Spleen (tissue), 13 donors: ENCODE measurements at regions of chr19 and their contacts with region 1.

Region 1: GRCh38 chr19:39532233-39533002 is at the start of gene EID2B:
- DNase-seq: peak; percentile 99
- H3K4me3 ChIP-seq: peak within 1 kb of the TSS; percentile 56 to 92 (median 80)
- H3K27ac ChIP-seq: peak within 1 kb of the TSS; percentile 65 to 90 (median 82)
- H3K4me1 ChIP-seq: peaks cover 5 to 43% (median 25%) of the 10 kb centered on the region in 6 donors
- H3K27me3 ChIP-seq: no peaks in the 10 kb centered on the region
- CTCF ChIP-seq: peak; percentile 94 to 100 (median 98)
- POLR2A ChIP-seq: peak in 1 of 3 donors; percentile 34
- total RNA-seq, gene EID2B: 2.0 to 5.3 (median 4.5) TPM

Region 2: GRCh38 chr19:39125554-39126311 is 406.7 kb before region 1 on chr19 and contains the start of gene PAK4:
- intact Hi-C with region 1: loop called (anchors 10 kb)
- DNase-seq: peak; percentile 99
- H3K4me3 ChIP-seq: peak within 1 kb of the TSS; percentile 79 to 99 (median 95)
- H3K27ac ChIP-seq: peak within 1 kb of the TSS; percentile 49 to 93 (median 84)
- H3K4me1 ChIP-seq: peaks cover 0 to 74% (median 52%) of the 10 kb centered on the region in 6 donors
- H3K27me3 ChIP-seq: peaks cover 0 to 6% (median 0%) of the 10 kb centered on the region in 7 donors
- CTCF ChIP-seq: peak in 2 of 11 experiments; percentile 24 to 43
- POLR2A ChIP-seq: peak in 2 of 3 donors; percentile 5 to 32
- total RNA-seq, gene PAK4: 9.5 to 27.8 (median 19.8) TPM

Region 3: GRCh38 chr19:39445265-39446111 is 86.9 kb before region 1 on chr19 and contains the start of gene SUPT5H:
- intact Hi-C with region 1: loop called (anchors 10 kb)
- DNase-seq: peak; percentile 99
- H3K4me3 ChIP-seq: peak within 1 kb of the TSS; percentile 60 to 97 (median 82)
- H3K27ac ChIP-seq: peak within 1 kb of the TSS; percentile 89 to 97 (median 96)
- H3K4me1 ChIP-seq: peaks cover 42 to 66% (median 55%) of the 10 kb centered on the region in 6 donors
- H3K27me3 ChIP-seq: no peaks in the 10 kb centered on the region
- CTCF ChIP-seq: peak in 4 of 11 experiments; percentile 15 to 43 (median 30)
- POLR2A ChIP-seq: peak; percentile 77 to 89 (median 85)
- total RNA-seq, gene SUPT5H: 103 to 125 (median 108) TPM

Region 4: DNA sequence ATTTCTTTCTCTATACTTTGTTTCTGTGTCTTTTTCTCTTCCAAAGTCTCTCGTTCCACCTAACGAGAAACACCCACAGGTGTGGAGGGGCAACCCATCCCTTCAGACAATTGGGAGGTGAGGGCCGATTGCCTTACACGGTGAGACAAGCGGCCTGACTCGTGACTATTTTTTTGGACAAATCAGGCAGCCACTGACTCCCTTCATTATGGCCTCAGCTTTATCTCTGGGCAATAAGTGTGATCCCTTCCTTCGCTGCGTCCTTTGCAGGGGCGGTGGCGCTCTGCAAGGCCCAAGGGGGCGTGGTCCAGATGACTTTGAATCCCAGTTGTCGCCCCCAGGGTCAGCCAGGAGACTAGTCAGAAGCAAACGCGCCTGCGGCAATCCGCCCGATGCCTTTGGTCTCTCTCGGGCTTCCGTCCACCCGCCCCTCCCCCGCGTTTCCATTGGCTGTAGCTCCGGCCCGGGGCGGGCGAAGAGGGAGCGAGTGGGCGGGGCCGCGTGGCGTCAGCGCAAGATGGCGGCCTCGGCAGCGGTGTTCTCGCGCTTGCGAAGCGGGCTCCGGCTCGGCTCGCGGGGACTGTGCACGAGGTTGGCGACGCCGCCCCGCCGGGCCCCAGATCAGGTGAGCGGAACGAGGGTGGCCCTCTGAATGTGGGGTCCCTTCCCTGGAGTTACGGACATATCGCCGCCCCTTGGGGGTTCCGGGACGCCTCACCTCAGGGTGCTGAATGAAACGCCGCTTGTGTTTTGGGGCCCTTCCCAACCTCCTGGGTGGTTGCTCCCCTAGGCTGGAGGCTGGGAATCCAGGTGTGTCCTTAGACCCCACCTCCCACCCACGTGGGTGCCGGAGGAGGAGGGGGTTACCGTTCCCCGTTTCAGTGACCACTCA is 51.8 kb before region 1 on chr19 and contains the start of gene TIMM50:
- intact Hi-C with region 1: loop called (anchors 5 kb)
- DNase-seq: peak; percentile 99
- H3K4me3 ChIP-seq: peak within 1 kb of the TSS; percentile 89 to 100 (median 96)
- H3K27ac ChIP-seq: peak within 1 kb of the TSS; percentile 55 to 90 (median 83)
- H3K4me1 ChIP-seq: peaks cover 11 to 35% (median 23%) of the 10 kb centered on the region in 6 donors
- H3K27me3 ChIP-seq: no peaks in the 10 kb centered on the region
- CTCF ChIP-seq: peak in 2 of 11 experiments; percentile 19 to 26
- POLR2A ChIP-seq: peak in 1 of 3 donors; percentile 5
- total RNA-seq, gene TIMM50: 30.3 to 51.5 (median 41.8) TPM

Region 5: GRCh38 chr19:39599116-39599515 is 66.7 kb after region 1 on chr19:
- intact Hi-C with region 1: no loop called
- DNase-seq: no peak
- H3K4me3 ChIP-seq: no peak overlapping the region
- H3K27ac ChIP-seq: no peak overlapping the region
- H3K4me1 ChIP-seq: no peaks in the 10 kb centered on the region
- H3K27me3 ChIP-seq: peaks cover 0 to 58% (median 9%) of the 10 kb centered on the region in 7 donors
- CTCF ChIP-seq: no peak
- POLR2A ChIP-seq: no peak